CD4-positive, alpha-beta memory T cell (primary cell): ENCODE measurements at regions of chr22 and their contacts with region 1.

Region 1: DNA sequence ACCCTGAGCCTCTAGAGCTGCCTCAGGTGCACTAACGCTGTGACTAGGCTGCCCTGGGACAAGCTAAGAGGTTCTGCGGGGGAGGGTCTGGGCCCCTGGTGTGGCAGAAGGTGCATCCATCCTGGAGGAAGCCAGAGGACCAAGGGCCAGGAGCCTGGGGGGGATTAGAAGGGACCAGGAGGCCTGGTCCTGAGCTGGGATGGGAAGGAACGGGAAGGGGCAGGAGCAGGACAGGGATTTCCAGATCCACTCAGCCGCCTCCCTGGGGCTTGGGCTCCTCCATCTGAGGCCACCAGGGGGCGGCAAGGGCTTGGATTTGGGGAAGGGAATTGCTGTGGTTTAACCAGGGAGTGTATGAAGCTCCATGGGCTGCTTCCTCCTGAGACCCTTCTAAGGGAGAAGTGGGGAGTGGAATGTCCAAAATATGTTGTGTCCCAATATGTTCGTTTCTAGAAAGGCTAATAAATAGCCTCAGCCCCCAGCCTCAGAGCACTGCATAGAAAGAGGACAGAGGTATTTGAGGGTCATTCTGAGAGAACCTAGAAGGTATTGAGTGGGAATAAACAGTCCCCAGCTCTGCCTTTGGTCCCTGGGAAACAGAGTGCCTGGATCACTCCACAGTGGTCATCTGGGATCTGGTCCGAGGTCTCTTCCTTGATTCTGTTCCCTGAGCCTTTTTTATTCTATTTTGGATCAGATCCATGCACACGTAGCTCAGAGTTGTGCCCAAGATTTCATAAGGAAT is 17.4 kb upstream of the PRAME start:
- DNase-seq: peak in 1 of 5 donors; percentile 9
- H3K4me3 ChIP-seq: no peak overlapping the region
- H3K4me3 Mint-ChIP-seq: no peak overlapping the region
- H3K27ac ChIP-seq: no peak overlapping the region
- H3K27ac Mint-ChIP-seq: no peak overlapping the region
- H3K4me1 ChIP-seq: no peaks in the 10 kb centered on the region
- H3K4me1 Mint-ChIP-seq: no peaks in the 10 kb centered on the region
- H3K27me3 ChIP-seq: no peaks in the 10 kb centered on the region
- H3K27me3 Mint-ChIP-seq: peaks cover 4 to 18% of the 10 kb centered on the region in 2 donors

Region 2: GRCh38 chr22:22593964-22594656 is 17.7 kb after region 1 on chr22:
- CTCF ChIA-PET with region 1: interaction called, 57 read pairs
- POLR2A ChIA-PET with region 1: no interaction called
- intact Hi-C with region 1: no loop called
- DNase-seq: peak; percentile 31 to 59 (median 36)
- H3K4me3 ChIP-seq: no peak overlapping the region
- H3K4me3 Mint-ChIP-seq: no peak overlapping the region
- H3K27ac ChIP-seq: no peak overlapping the region
- H3K27ac Mint-ChIP-seq: no peak overlapping the region
- H3K4me1 ChIP-seq: no peaks in the 10 kb centered on the region
- H3K4me1 Mint-ChIP-seq: peaks cover 0 to 4% (median 2%) of the 10 kb centered on the region in 4 donors
- H3K27me3 ChIP-seq: no peaks in the 10 kb centered on the region
- H3K27me3 Mint-ChIP-seq: peaks cover 3 to 6% of the 10 kb centered on the region in 2 donors